Mammary epithelial cell (primary cell): ENCODE measurements at regions of chr4 and their contacts with region 1.

Region 1: DNA sequence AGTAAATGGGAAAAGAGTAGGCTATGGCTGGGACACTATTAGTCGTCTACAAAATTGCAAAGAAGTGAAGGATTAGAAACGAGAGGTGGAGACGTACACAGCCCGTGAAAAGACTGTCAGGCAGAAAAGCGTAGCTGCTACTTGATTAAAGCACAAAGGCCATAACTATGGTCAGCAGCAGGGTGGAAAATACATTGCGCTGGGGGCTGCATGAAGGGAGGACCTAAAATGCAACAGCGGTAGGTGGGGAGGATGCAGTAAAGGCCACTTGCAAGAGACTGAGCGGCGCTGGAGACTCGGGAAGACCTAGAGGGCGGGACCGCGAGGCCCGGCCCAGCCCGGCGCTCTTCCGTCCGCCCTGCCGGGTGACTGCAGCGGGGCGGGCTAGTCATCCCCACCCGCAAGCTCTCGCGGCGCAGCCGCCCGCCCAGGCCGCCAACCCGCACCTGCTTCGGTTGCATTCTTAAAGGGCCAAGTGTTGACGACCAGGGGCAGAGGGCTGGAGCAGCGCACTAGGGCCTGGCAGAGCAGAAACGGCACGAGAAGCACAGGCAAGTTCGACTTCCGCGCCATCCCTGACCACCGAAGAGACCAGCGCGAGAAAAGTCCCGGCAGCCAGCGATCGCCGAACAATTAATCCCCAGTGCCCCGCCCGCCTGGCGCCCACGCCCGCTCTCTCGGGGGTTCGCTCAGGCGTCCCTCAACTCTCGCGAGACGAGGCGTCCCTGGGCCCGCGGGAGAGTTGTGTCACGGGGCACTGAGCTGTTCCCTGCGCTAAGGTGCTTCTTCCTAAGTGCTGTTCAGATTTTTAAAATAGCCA is at the start of gene AGA:
- DNase-seq: peak; percentile 94
- H3K4me3 ChIP-seq: peak within 1 kb of the TSS; percentile 73 to 78 (median 77)
- H3K27ac ChIP-seq: peak within 1 kb of the TSS; percentile 93
- H3K4me1 ChIP-seq: peaks cover 16% of the 10 kb centered on the region
- H3K27me3 ChIP-seq: no peaks in the 10 kb centered on the region
- CTCF ChIP-seq: no peak
- total RNA-seq, gene AGA: 12.7 to 49.3 TPM

Region 2: DNA sequence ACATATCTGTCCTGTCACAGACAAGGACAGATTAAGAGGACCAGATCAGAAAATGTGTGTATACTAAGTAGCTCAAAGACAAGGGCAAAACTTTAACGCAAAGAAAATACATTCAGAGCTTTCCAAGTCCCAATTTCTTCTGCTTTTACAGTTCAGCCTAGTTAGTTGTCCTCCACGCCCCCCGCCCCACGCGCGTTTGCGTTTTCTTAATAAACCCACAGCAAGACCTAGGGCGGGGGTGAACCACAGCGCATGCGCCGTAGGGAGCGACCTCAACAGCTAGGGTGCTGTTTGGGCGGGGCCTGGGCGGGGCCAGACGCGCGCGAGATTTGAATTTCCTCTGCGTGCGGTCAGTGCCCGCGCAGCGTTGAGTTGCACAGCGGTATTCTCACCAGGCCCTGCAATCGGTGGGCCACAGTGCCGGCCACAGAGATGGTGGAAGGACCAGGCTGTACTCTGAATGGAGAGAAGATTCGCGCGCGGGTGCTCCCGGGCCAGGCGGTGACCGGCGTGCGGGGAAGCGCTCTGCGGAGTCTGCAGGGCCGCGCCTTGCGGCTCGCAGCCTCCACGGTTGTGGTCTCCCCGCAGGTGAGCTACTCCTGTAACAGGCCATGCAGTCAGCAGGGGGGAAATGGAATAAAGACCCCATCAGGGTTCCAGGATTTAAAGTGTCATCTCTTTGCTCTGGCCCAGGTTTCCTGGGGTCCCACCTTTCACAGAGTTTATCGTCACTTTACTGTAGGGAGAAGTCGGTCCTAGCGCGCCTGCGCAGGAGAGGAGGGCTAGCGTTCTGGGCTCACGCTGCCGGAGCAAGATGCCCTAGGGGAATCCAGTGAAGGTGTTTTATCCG is 132.3 kb before region 1 on chr4 and contains the start of gene NEIL3:
- CTCF ChIA-PET with region 1: no interaction called
- dilution Hi-C with region 1: no loop called
- in situ Hi-C with region 1: no loop called
- intact Hi-C with region 1: loop called (anchors 5 kb)
- DNase-seq: peak; percentile 82
- H3K4me3 ChIP-seq: peak within 1 kb of the TSS; percentile 80 to 91 (median 86)
- H3K27ac ChIP-seq: peak within 1 kb of the TSS; percentile 54
- H3K4me1 ChIP-seq: peaks cover 18% of the 10 kb centered on the region
- H3K27me3 ChIP-seq: no peaks in the 10 kb centered on the region
- CTCF ChIP-seq: no peak
- total RNA-seq, gene NEIL3: 1.2 to 7.5 TPM

Region 3: GRCh38 chr4:177484613-177485021 is 42.6 kb after region 1 on chr4:
- CTCF ChIA-PET with region 1: no interaction called
- dilution Hi-C with region 1: no loop called
- in situ Hi-C with region 1: no loop called
- intact Hi-C with region 1: loop called (anchors 2 kb)
- DNase-seq: peak; percentile 95
- H3K4me3 ChIP-seq: no peak overlapping the region
- H3K27ac ChIP-seq: peak overlapping the region; percentile 90
- H3K4me1 ChIP-seq: peaks cover 44% of the 10 kb centered on the region
- H3K27me3 ChIP-seq: no peaks in the 10 kb centered on the region
- CTCF ChIP-seq: no peak

Region 4: DNA sequence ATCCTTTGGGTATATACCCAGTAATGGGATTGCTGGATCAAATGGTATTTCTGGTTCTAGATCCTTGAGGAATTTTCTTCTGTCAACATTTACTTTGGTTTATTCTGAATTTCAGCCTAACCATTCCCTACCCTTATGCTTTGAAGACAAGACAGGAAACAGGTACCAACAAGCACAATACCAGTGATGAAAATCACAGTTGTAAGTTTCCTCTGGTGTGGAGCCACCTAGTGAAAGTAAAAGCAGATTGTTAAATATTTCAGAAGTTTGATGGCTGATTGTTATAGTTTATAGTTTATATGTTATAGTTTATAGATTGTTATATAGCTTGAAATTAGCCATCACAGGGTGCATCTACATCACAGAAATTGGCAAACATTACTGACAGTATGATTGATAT is 104.7 kb after region 1 on chr4:
- CTCF ChIA-PET with region 1: no interaction called
- dilution Hi-C with region 1: no loop called
- in situ Hi-C with region 1: no loop called
- intact Hi-C with region 1: loop called (anchors 2 kb)
- DNase-seq: peak; percentile 24
- H3K4me3 ChIP-seq: no peak overlapping the region
- H3K27ac ChIP-seq: no peak overlapping the region
- H3K4me1 ChIP-seq: no peaks in the 10 kb centered on the region
- H3K27me3 ChIP-seq: no peaks in the 10 kb centered on the region
- CTCF ChIP-seq: peak; percentile 17 to 53